Activated T-helper 2 cell treated with anti-CD3 and anti-CD28 coated beads, Interferon-gamma antibody, Interleukin-2, Interleukin-4, amounts not matched to agents 10 μg/mL and 5 μg/mL and 100 μg/mL, durations not matched to agents 14 hours and 24 hours and 36 hours (primary cell): ENCODE measurements at regions of chr10 and their contacts with region 1.

Region 1: DNA sequence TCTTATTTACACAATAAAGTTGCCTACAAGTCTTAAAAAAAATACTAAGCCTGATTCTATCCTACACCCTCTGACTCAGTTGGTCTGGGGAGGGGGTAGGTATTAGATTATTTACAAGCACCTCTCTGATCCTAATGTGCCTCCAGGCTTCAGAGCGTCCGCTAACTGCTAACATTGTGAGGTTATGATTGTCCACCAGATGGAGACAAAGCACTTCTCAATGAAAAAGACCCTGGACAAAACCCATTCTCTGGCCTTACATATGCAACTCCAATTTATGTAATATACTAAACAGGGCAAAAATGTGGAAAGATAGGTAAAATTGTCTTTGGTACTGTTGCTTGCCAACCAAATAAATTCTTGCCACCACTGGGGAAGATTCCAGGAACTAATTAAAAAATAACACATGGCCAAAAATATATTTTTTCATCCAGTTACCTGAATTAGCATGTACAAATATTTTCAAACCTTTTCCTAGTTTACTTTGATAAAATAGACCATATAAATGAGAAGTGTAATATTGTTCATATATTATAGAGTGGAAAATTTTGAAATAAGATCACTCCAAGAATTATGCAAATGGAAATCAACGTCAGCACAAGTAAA is 92.4 kb downstream of the KIF20B start:
- DNase-seq: no peak
- H3K4me3 Mint-ChIP-seq: no peak overlapping the region
- H3K27ac Mint-ChIP-seq: no peak overlapping the region
- H3K4me1 Mint-ChIP-seq: peaks cover 9% of the 10 kb centered on the region
- H3K27me3 Mint-ChIP-seq: no peaks in the 10 kb centered on the region

Region 2: DNA sequence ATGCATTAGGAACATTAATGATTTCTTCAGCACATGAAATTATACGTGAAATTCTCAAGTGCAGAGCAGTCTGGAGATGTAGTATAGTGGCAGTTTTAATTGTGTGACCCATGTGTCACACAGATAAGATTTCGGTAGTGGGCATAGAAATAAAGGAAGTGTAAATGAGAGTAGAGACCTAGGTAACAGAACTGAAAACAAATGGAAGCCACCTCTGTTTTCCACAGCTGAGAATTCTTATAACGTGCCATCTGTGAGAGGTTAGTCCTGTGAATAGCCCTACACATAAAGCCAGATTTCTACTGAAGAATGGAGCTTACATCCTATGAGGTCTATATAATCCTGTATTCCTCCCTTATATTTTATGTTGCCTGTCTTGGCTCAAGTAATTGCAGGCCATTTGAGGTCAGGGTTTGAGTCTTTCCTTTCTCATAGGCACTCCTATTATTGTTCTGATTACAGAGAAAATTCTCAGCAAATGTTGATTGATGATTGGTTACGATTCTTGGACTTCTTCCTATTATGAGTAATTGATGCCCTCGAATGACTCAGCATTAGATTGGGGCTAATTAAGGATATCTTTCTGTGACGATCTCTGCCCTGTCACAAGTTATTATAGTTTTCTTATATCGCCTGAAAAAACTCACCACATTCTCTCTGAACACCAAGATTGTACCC is 165.8 kb after region 1 on chr10:
- intact Hi-C with region 1: loop called (anchors 10 kb)
- DNase-seq: no peak
- H3K4me3 Mint-ChIP-seq: no peak overlapping the region
- H3K27ac Mint-ChIP-seq: no peak overlapping the region
- H3K4me1 Mint-ChIP-seq: no peaks in the 10 kb centered on the region
- H3K27me3 Mint-ChIP-seq: no peaks in the 10 kb centered on the region

Region 3: GRCh38 chr10:90138844-90139243 is 345.1 kb after region 1 on chr10:
- intact Hi-C with region 1: loop called (anchors 5 kb)
- DNase-seq: no peak
- H3K4me3 Mint-ChIP-seq: no peak overlapping the region
- H3K27ac Mint-ChIP-seq: no peak overlapping the region
- H3K4me1 Mint-ChIP-seq: no peaks in the 10 kb centered on the region
- H3K27me3 Mint-ChIP-seq: no peaks in the 10 kb centered on the region

Region 4: DNA sequence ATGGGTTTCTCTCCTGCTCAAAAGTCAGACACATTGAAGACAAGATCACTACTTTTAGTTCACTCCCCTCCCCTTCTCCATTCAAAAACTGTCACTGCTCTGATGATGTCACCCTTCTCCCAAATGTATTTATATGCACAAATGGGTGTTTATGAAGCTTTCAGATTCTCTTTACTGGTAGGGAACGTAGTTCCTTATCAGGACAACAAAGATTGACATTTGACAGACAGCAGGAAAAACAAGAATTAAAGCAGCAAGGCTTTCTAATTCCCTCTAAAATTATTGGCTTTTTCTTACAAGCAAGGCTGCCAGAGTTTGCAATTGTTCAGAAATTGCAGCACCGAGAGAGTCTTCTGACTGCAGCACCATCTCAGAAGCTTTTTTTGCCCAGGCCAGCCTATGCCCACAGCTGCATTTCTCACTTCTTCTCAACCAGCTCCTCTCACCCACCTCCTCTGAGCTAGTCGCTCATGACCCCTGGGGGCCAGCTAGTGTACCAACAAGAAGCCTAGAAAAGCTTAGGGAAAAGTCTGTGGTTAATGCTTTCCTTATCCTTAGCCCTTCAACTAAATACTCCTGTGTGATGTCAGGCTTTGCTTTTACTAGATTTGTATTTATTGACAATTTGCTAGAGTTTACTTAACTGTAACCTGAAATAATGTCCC is 799.0 kb after region 1 on chr10:
- intact Hi-C with region 1: loop called (anchors 10 kb)
- DNase-seq: no peak
- H3K4me3 Mint-ChIP-seq: no peak overlapping the region
- H3K27ac Mint-ChIP-seq: no peak overlapping the region
- H3K4me1 Mint-ChIP-seq: no peaks in the 10 kb centered on the region
- H3K27me3 Mint-ChIP-seq: peaks cover 3% of the 10 kb centered on the region

Region 5: GRCh38 chr10:90787393-90788198 is 993.8 kb after region 1 on chr10:
- intact Hi-C with region 1: loop called (anchors 2 kb)
- DNase-seq: no peak
- H3K4me3 Mint-ChIP-seq: no peak overlapping the region
- H3K27ac Mint-ChIP-seq: no peak overlapping the region
- H3K4me1 Mint-ChIP-seq: peaks cover 10% of the 10 kb centered on the region
- H3K27me3 Mint-ChIP-seq: peaks cover 30% of the 10 kb centered on the region

Region 6: GRCh38 chr10:90862908-90863514 is 1069.3 kb after region 1 on chr10:
- intact Hi-C with region 1: loop called (anchors 2 kb)
- DNase-seq: no peak
- H3K4me3 Mint-ChIP-seq: no peak overlapping the region
- H3K27ac Mint-ChIP-seq: no peak overlapping the region
- H3K4me1 Mint-ChIP-seq: peaks cover 10% of the 10 kb centered on the region
- H3K27me3 Mint-ChIP-seq: peaks cover 83% of the 10 kb centered on the region